ENCODE measurements at regions of chr6 and their contacts with region 1.

Region 1: DNA sequence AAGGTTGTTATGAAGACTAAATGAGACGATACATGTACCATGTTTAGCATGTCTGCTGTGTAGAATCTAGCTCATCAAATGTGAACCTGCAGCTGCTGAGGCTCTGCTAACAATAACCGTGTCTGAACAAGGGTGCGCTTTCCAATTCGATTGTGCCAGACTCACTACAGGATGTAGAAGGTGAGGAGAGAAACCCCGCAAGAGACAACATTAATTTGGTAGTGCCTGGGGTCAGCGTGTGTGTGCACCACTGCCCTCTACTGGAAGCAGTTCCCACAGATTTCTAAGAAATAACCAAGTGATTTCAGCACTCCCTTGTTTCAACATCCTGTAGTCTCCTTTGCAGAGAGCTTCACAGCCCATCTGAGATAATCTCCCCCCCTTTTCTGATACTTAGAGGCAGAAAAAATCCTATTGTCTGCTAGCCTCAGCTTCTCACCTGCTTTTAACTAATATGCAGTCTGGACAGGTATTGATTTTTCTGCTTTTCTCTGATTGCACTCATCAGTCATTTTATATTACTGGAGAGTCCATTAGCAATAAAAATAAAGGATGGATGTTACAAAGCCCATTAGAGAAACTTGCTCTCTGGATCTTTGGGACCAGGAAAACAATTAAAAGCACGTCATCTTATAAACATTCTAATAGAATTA is 96.7 kb upstream of the BACH2 start:
- DNase-seq: peak; percentile 89
- ATAC-seq: peak; percentile 68
- H3K4me3 ChIP-seq: peak overlapping the region in 1 of 5 experiments; percentile 9
- H3K4me3 Mint-ChIP-seq: peak overlapping the region; percentile 63
- H3K27ac ChIP-seq: peak overlapping the region; percentile 42 to 60
- H3K27ac Mint-ChIP-seq: peak overlapping the region; percentile 77
- H3K4me1 ChIP-seq: peaks cover 37 to 44% of the 10 kb centered on the region in 2 donors
- H3K4me1 Mint-ChIP-seq: peaks cover 49% of the 10 kb centered on the region
- H3K27me3 ChIP-seq: no peaks in the 10 kb centered on the region
- H3K27me3 Mint-ChIP-seq: no peaks in the 10 kb centered on the region
- CTCF ChIP-seq: peak; percentile 85

Region 2: GRCh38 chr6:90080876-90081481 is 312.4 kb before region 1 on chr6:
- CTCF ChIA-PET with region 1: no interaction called
- POLR2A ChIA-PET with region 1: no interaction called
- intact Hi-C with region 1: loop called (anchors 5 kb)
- DNase-seq: peak; percentile 54
- ATAC-seq: peak; percentile 48
- H3K4me3 ChIP-seq: peak overlapping the region in 4 of 5 experiments; percentile 11 to 48 (median 40)
- H3K4me3 Mint-ChIP-seq: peak overlapping the region; percentile 90
- H3K27ac ChIP-seq: peak overlapping the region; percentile 4 to 52
- H3K27ac Mint-ChIP-seq: peak overlapping the region; percentile 90
- H3K4me1 ChIP-seq: peaks cover 61 to 72% of the 10 kb centered on the region in 2 donors
- H3K4me1 Mint-ChIP-seq: peaks cover 92% of the 10 kb centered on the region
- H3K27me3 ChIP-seq: no peaks in the 10 kb centered on the region
- H3K27me3 Mint-ChIP-seq: no peaks in the 10 kb centered on the region
- CTCF ChIP-seq: no peak

Region 3: DNA sequence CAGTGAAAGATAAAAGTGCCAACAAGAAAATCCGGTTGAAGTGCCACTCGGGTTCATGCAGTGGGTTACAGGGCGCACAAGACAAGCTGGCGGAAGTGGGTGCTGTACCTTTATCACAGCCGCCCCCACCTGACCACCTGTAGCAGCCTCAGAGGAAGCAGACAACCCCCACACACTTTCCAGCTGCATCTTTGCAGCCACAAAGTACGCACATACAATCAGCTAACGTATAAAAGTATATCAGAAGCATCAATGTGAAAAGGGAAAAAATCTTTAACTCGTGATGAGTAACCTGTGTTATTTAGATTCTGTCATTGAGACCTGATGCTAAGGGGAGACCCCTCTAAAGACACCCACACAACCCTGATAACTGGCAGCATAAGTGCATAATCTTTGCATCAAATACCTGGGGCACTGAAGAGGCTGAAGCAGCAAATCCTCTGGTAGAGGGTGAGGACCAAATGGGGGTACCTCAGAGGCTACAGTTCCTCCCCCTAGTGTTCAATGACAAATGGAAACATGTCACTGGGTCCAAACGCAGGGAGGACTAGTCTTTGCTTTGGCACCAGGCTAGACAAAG is 118.8 kb before region 1 on chr6:
- CTCF ChIA-PET with region 1: interaction called, 18 read pairs
- POLR2A ChIA-PET with region 1: interaction called, 4 read pairs
- intact Hi-C with region 1: loop called (anchors 5 kb)
- DNase-seq: peak; percentile 94
- ATAC-seq: peak; percentile 92
- H3K4me3 ChIP-seq: peak overlapping the region in 1 of 5 experiments; percentile 11
- H3K4me3 Mint-ChIP-seq: peak overlapping the region; percentile 59
- H3K27ac ChIP-seq: peak overlapping the region; percentile 95 to 97
- H3K27ac Mint-ChIP-seq: peak overlapping the region; percentile 87
- H3K4me1 ChIP-seq: peaks cover 55 to 75% of the 10 kb centered on the region in 2 donors
- H3K4me1 Mint-ChIP-seq: peaks cover 84% of the 10 kb centered on the region
- H3K27me3 ChIP-seq: no peaks in the 10 kb centered on the region
- H3K27me3 Mint-ChIP-seq: no peaks in the 10 kb centered on the region
- CTCF ChIP-seq: peak; percentile 34

Region 4: GRCh38 chr6:90296346-90297114 is 96.8 kb before region 1 on chr6 and contains the start of gene BACH2:
- CTCF ChIA-PET with region 1: interaction called, 89 read pairs
- POLR2A ChIA-PET with region 1: interaction called, 5 read pairs
- intact Hi-C with region 1: loop called (anchors 1 kb)
- DNase-seq: peak; percentile 97
- ATAC-seq: peak; percentile 76
- H3K4me3 ChIP-seq: peak within 1 kb of the TSS; percentile 61 to 95 (median 79)
- H3K4me3 Mint-ChIP-seq: peak within 1 kb of the TSS; percentile 89
- H3K27ac ChIP-seq: peak within 1 kb of the TSS; percentile 94
- H3K27ac Mint-ChIP-seq: peak within 1 kb of the TSS; percentile 96
- H3K4me1 ChIP-seq: peaks cover 47 to 51% of the 10 kb centered on the region in 2 donors
- H3K4me1 Mint-ChIP-seq: peaks cover 50% of the 10 kb centered on the region
- H3K27me3 ChIP-seq: no peaks in the 10 kb centered on the region
- H3K27me3 Mint-ChIP-seq: no peaks in the 10 kb centered on the region
- CTCF ChIP-seq: no peak
- total RNA-seq, gene BACH2: 235 and 254 TPM in 2 replicates

Region 5: GRCh38 chr6:90350689-90351554 is 42.4 kb before region 1 on chr6:
- CTCF ChIA-PET with region 1: interaction called, 7 read pairs
- POLR2A ChIA-PET with region 1: no interaction called
- intact Hi-C with region 1: loop called (anchors 1 kb)
- DNase-seq: peak; percentile 92
- ATAC-seq: peak; percentile 96
- H3K4me3 ChIP-seq: peak overlapping the region in 2 of 5 experiments; percentile 5 to 38
- H3K4me3 Mint-ChIP-seq: peak overlapping the region; percentile 54
- H3K27ac ChIP-seq: peak overlapping the region; percentile 83 to 95
- H3K27ac Mint-ChIP-seq: peak overlapping the region; percentile 86
- H3K4me1 ChIP-seq: peaks cover 27% of the 10 kb centered on the region in 2 donors
- H3K4me1 Mint-ChIP-seq: peaks cover 36% of the 10 kb centered on the region
- H3K27me3 ChIP-seq: no peaks in the 10 kb centered on the region
- H3K27me3 Mint-ChIP-seq: no peaks in the 10 kb centered on the region
- CTCF ChIP-seq: no peak

Region 6: DNA sequence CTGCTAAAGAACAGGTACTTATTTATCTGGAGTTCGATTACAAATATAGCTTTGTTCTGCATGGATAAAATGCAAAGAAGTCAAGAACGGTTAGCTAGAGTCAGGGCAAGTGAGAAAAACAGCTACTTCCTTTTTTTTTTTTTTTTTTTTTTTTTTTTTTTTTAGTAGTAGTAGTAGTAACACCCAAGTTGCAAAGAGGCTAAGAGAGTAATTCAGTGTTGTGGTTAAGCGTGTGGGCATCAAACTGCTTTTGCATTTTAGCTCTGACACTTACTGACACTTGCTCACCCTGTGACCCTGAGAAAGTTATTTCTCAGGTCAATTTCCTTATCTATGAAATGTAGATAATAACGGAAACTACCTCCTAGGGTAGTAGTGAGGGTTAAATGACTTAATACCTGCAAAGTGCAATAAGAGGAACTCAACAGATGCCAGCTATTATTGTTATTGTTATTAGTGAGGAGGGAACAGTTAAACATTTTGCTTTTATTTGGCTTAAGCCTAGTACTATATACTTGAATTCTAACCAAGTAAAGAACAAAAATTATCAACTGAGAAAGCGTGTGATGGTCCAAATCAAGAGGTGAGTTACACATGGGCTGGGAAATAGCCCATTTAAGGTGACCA is 10.0 kb before region 1 on chr6:
- CTCF ChIA-PET with region 1: interaction called, 25 read pairs
- POLR2A ChIA-PET with region 1: interaction called, 4 read pairs
- intact Hi-C with region 1: loop called (anchors 1 kb)
- DNase-seq: peak; percentile 86
- ATAC-seq: peak; percentile 84
- H3K4me3 ChIP-seq: peak overlapping the region in 2 of 5 experiments; percentile 19 to 50
- H3K4me3 Mint-ChIP-seq: peak overlapping the region; percentile 78
- H3K27ac ChIP-seq: peak overlapping the region; percentile 65 to 93
- H3K27ac Mint-ChIP-seq: peak overlapping the region; percentile 92
- H3K4me1 ChIP-seq: peaks cover 72 to 74% of the 10 kb centered on the region in 2 donors
- H3K4me1 Mint-ChIP-seq: peaks cover 79% of the 10 kb centered on the region
- H3K27me3 ChIP-seq: no peaks in the 10 kb centered on the region
- H3K27me3 Mint-ChIP-seq: no peaks in the 10 kb centered on the region
- CTCF ChIP-seq: no peak

Region 7: GRCh38 chr6:90425161-90425641 is 31.8 kb after region 1 on chr6:
- CTCF ChIA-PET with region 1: interaction called, 11 read pairs
- POLR2A ChIA-PET with region 1: no interaction called
- intact Hi-C with region 1: loop called (anchors 5 kb)
- DNase-seq: peak; percentile 58
- ATAC-seq: peak; percentile 91
- H3K4me3 ChIP-seq: peak overlapping the region in 3 of 5 experiments; percentile 33 to 54 (median 38)
- H3K4me3 Mint-ChIP-seq: peak overlapping the region; percentile 76
- H3K27ac ChIP-seq: peak overlapping the region; percentile 42 to 78
- H3K27ac Mint-ChIP-seq: peak overlapping the region; percentile 70
- H3K4me1 ChIP-seq: peaks cover 12 to 14% of the 10 kb centered on the region in 2 donors
- H3K4me1 Mint-ChIP-seq: peaks cover 17% of the 10 kb centered on the region
- H3K27me3 ChIP-seq: no peaks in the 10 kb centered on the region
- H3K27me3 Mint-ChIP-seq: no peaks in the 10 kb centered on the region
- CTCF ChIP-seq: no peak